CD4-positive, alpha-beta T cell (primary cell): ENCODE measurements at regions of chr10 and their contacts with region 1.

Region 1: GRCh38 chr10:110007701-110008517 is at the start of gene ADD3:
- DNase-seq: peak; percentile 83 to 97 (median 90)
- ATAC-seq: peak; percentile 72
- H3K4me3 ChIP-seq: peak within 1 kb of the TSS; percentile 63
- H3K4me3 Mint-ChIP-seq: peak within 1 kb of the TSS; percentile 99
- H3K27ac ChIP-seq: peak within 1 kb of the TSS; percentile 64 to 93
- H3K27ac Mint-ChIP-seq: no peak within 1 kb of the TSS
- H3K4me1 ChIP-seq: peaks cover 20% of the 10 kb centered on the region
- H3K4me1 Mint-ChIP-seq: peaks cover 50% of the 10 kb centered on the region
- H3K27me3 ChIP-seq: no peaks in the 10 kb centered on the region
- H3K27me3 Mint-ChIP-seq: no peaks in the 10 kb centered on the region
- CTCF ChIP-seq: no peak
- total RNA-seq, gene ADD3: 273 to 302 TPM

Region 2: GRCh38 chr10:109922976-109923921 is 84.7 kb before region 1 on chr10 and contains the start of gene XPNPEP1:
- CTCF ChIA-PET with region 1: no interaction called
- POLR2A ChIA-PET with region 1: interaction called, 4 read pairs
- intact Hi-C with region 1: loop called (anchors 2 to 5 kb)
- DNase-seq: peak; percentile 48 to 94 (median 68)
- ATAC-seq: peak; percentile 88
- H3K4me3 ChIP-seq: peak within 1 kb of the TSS; percentile 87
- H3K4me3 Mint-ChIP-seq: peak within 1 kb of the TSS; percentile 91
- H3K27ac ChIP-seq: peak within 1 kb of the TSS; percentile 63 to 83
- H3K27ac Mint-ChIP-seq: peak within 1 kb of the TSS; percentile 93
- H3K4me1 ChIP-seq: peaks cover 39% of the 10 kb centered on the region
- H3K4me1 Mint-ChIP-seq: peaks cover 53% of the 10 kb centered on the region
- H3K27me3 ChIP-seq: no peaks in the 10 kb centered on the region
- H3K27me3 Mint-ChIP-seq: no peaks in the 10 kb centered on the region
- CTCF ChIP-seq: no peak
- total RNA-seq, gene XPNPEP1: 50.3 to 54.3 TPM

Region 3: GRCh38 chr10:110022716-110023504 is 15.0 kb after region 1 on chr10:
- CTCF ChIA-PET with region 1: no interaction called
- POLR2A ChIA-PET with region 1: interaction called, 12 read pairs
- intact Hi-C with region 1: no loop called
- DNase-seq: no peak
- ATAC-seq: no peak
- H3K4me3 ChIP-seq: no peak overlapping the region
- H3K4me3 Mint-ChIP-seq: peak overlapping the region; percentile 26
- H3K27ac ChIP-seq: no peak overlapping the region
- H3K27ac Mint-ChIP-seq: peak overlapping the region; percentile 43
- H3K4me1 ChIP-seq: peaks cover 16% of the 10 kb centered on the region
- H3K4me1 Mint-ChIP-seq: peaks cover 90% of the 10 kb centered on the region
- H3K27me3 ChIP-seq: no peaks in the 10 kb centered on the region
- H3K27me3 Mint-ChIP-seq: no peaks in the 10 kb centered on the region
- CTCF ChIP-seq: no peak

Region 4: GRCh38 chr10:110067960-110068770 is 60.3 kb after region 1 on chr10:
- CTCF ChIA-PET with region 1: no interaction called
- POLR2A ChIA-PET with region 1: interaction called, 69 read pairs
- intact Hi-C with region 1: loop called in 1 of 2 experiments (anchors 5 kb)
- DNase-seq: peak in 9 of 14 experiments; percentile 11 to 77 (median 34)
- ATAC-seq: peak; percentile 85
- H3K4me3 ChIP-seq: peak overlapping the region; percentile 7
- H3K4me3 Mint-ChIP-seq: peak overlapping the region; percentile 74
- H3K27ac ChIP-seq: peak overlapping the region; percentile 44 to 57
- H3K27ac Mint-ChIP-seq: peak overlapping the region; percentile 87
- H3K4me1 ChIP-seq: peaks cover 38% of the 10 kb centered on the region
- H3K4me1 Mint-ChIP-seq: peaks cover 93% of the 10 kb centered on the region
- H3K27me3 ChIP-seq: no peaks in the 10 kb centered on the region
- H3K27me3 Mint-ChIP-seq: no peaks in the 10 kb centered on the region
- CTCF ChIP-seq: no peak

Region 5: GRCh38 chr10:110210674-110211464 is 203.0 kb after region 1 on chr10:
- CTCF ChIA-PET with region 1: no interaction called
- POLR2A ChIA-PET with region 1: interaction called, 9 read pairs
- intact Hi-C with region 1: loop called (anchors 5 kb)
- DNase-seq: peak; percentile 84 to 96 (median 87)
- ATAC-seq: peak; percentile 41
- H3K4me3 ChIP-seq: peak overlapping the region; percentile 94
- H3K4me3 Mint-ChIP-seq: peak overlapping the region; percentile 99
- H3K27ac ChIP-seq: peak overlapping the region; percentile 85 to 98
- H3K27ac Mint-ChIP-seq: peak overlapping the region; percentile 100
- H3K4me1 ChIP-seq: peaks cover 76% of the 10 kb centered on the region
- H3K4me1 Mint-ChIP-seq: peaks cover 58% of the 10 kb centered on the region
- H3K27me3 ChIP-seq: no peaks in the 10 kb centered on the region
- H3K27me3 Mint-ChIP-seq: peaks cover 5% of the 10 kb centered on the region
- CTCF ChIP-seq: no peak

Region 6: GRCh38 chr10:110567201-110568054 is 559.5 kb after region 1 on chr10 and contains the start of gene SMC3:
- CTCF ChIA-PET with region 1: no interaction called
- POLR2A ChIA-PET with region 1: no interaction called
- intact Hi-C with region 1: loop called in 1 of 2 experiments (anchors 10 kb)
- DNase-seq: peak; percentile 82 to 96 (median 88)
- ATAC-seq: peak; percentile 86
- H3K4me3 ChIP-seq: peak within 1 kb of the TSS; percentile 96
- H3K4me3 Mint-ChIP-seq: peak within 1 kb of the TSS; percentile 98
- H3K27ac ChIP-seq: peak within 1 kb of the TSS; percentile 79 to 83
- H3K27ac Mint-ChIP-seq: peak within 1 kb of the TSS; percentile 97
- H3K4me1 ChIP-seq: peaks cover 24% of the 10 kb centered on the region
- H3K4me1 Mint-ChIP-seq: peaks cover 49% of the 10 kb centered on the region
- H3K27me3 ChIP-seq: no peaks in the 10 kb centered on the region
- H3K27me3 Mint-ChIP-seq: peaks cover 21% of the 10 kb centered on the region
- CTCF ChIP-seq: no peak
- total RNA-seq, gene SMC3: 46.8 to 48.0 TPM